ENCODE measurements at regions of chr17 and their contacts with region 1.

Region 1: DNA sequence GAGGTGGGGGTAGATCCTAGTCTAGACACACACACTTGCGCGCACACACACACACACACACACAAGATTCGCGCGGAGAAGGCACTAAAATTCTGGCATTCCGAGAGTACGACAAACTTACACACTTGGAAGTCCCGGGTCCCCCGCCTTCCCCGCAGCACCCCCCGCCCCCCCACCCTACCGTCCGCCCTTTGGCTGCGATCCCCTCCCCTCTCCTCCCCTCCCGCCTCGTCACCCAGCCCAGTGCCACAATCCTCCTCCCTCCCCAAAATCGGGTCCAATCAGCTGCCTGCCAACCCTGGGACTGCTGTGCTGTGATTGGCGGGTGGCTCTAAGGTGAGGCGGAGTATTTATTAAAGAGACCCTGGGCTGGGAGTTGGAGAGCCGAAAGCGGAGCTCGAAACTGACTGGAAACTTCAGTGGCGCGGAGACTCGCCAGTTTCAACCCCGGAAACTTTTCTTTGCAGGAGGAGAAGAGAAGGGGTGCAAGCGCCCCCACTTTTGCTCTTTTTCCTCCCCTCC is at the start of gene SOX9:
- DNase-seq: peak; percentile 98
- H3K4me3 ChIP-seq: peak within 1 kb of the TSS; percentile 93
- H3K27ac ChIP-seq: peak within 1 kb of the TSS; percentile 67
- H3K4me1 ChIP-seq: peaks cover 36% of the 10 kb centered on the region
- H3K27me3 ChIP-seq: no peaks in the 10 kb centered on the region
- CTCF ChIP-seq: no peak
- total RNA-seq, gene SOX9: 31.1 and 37.5 TPM in 2 replicates

Region 2: GRCh38 chr17:71237903-71238538 is 882.7 kb before region 1 on chr17:
- CTCF ChIA-PET with region 1: no interaction called
- POLR2A ChIA-PET with region 1: no interaction called
- intact Hi-C with region 1: loop called (anchors 5 kb)
- DNase-seq: peak; percentile 12
- H3K4me3 ChIP-seq: no peak overlapping the region
- H3K27ac ChIP-seq: no peak overlapping the region
- H3K4me1 ChIP-seq: no peaks in the 10 kb centered on the region
- H3K27me3 ChIP-seq: no peaks in the 10 kb centered on the region
- CTCF ChIP-seq: peak; percentile 17; the same call in 1 of the 2 replicates

Region 3: DNA sequence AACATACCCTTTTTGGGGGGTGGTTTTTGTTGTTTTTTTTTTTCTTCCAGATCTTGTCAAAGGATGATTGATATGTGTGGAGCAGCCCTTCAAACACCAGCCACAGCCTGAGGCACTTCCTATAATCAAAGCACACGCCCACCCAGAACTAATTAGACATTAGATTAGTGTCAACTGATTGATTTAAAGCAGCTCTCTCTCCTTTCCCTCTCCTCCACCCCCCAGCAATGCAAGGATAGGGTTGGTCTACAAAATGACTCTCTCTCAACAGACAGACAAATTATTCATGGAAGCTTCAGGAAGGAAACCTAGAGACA is 250.2 kb before region 1 on chr17:
- CTCF ChIA-PET with region 1: no interaction called
- POLR2A ChIA-PET with region 1: no interaction called
- intact Hi-C with region 1: loop called (anchors 5 kb)
- DNase-seq: peak; percentile 88
- H3K4me3 ChIP-seq: no peak overlapping the region
- H3K27ac ChIP-seq: no peak overlapping the region
- H3K4me1 ChIP-seq: peaks cover 25% of the 10 kb centered on the region
- H3K27me3 ChIP-seq: no peaks in the 10 kb centered on the region
- CTCF ChIP-seq: no peak

Region 4: GRCh38 chr17:72338847-72339790 is 218.4 kb after region 1 on chr17:
- CTCF ChIA-PET with region 1: no interaction called
- POLR2A ChIA-PET with region 1: no interaction called
- intact Hi-C with region 1: loop called (anchors 10 kb)
- DNase-seq: peak; percentile 88
- H3K4me3 ChIP-seq: no peak overlapping the region
- H3K27ac ChIP-seq: peak overlapping the region; percentile 66
- H3K4me1 ChIP-seq: peaks cover 50% of the 10 kb centered on the region
- H3K27me3 ChIP-seq: no peaks in the 10 kb centered on the region
- CTCF ChIP-seq: no peak

Region 5: GRCh38 chr17:72419866-72420774 is 299.4 kb after region 1 on chr17:
- CTCF ChIA-PET with region 1: no interaction called
- POLR2A ChIA-PET with region 1: no interaction called
- intact Hi-C with region 1: loop called (anchors 5 kb)
- DNase-seq: peak; percentile 77
- H3K4me3 ChIP-seq: no peak overlapping the region
- H3K27ac ChIP-seq: peak overlapping the region; percentile 26
- H3K4me1 ChIP-seq: peaks cover 44% of the 10 kb centered on the region
- H3K27me3 ChIP-seq: no peaks in the 10 kb centered on the region
- CTCF ChIP-seq: no peak

Region 6: DNA sequence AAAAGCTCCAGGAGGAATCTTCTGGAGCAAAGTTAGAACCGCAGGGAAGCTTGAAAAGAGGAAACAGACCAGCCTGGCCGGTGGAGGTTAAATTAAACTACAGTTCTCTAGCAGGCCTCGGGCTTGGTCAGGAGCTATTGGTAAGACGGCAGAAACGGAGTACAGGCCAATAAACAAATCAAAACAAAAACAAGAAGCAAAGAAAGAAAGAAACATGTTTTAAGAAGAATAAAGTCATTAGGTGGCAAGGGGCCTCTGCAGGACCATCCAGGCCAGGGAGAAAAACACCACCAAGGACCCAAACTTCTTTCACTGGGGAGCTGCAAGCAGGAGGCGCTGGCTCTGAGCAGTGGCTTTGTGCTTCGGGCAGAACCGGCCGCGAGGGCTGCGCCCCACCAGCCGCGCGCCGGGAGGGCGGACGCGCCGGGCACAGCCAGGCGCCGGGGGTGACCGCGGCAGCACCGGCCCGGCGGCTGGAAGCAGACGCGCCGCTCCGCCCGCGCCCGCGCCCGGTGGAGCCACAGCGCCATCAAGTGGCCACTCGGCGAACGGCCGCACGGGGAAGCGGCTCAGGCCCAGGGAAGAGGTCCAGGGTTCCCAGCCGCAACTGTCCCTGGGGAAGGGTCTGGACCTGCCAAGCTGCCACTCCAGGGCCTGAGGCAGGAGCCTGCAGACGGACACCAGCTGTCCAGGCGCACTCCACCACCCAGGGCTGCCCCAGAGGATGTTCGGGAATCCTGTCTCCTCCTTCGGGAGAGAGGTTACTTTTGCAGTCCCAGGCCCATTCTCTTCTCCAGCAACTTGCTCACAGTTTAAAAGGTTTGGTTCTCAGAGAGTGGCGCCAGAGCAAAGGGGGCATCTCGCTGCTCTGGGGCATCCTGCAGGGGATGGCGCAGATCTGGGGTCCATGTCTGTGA is 419.5 kb after region 1 on chr17:
- CTCF ChIA-PET with region 1: interaction called, 10 read pairs
- POLR2A ChIA-PET with region 1: no interaction called
- intact Hi-C with region 1: loop called (anchors 2 kb)
- DNase-seq: peak; percentile 75
- H3K4me3 ChIP-seq: peak overlapping the region; percentile 8
- H3K27ac ChIP-seq: no peak overlapping the region
- H3K4me1 ChIP-seq: peaks cover 8% of the 10 kb centered on the region
- H3K27me3 ChIP-seq: no peaks in the 10 kb centered on the region
- CTCF ChIP-seq: peak; percentile 73

Measured in A673 (cell line).